H1 (cell line): ENCODE measurements at regions of chr2 and their contacts with region 1.

Region 1: GRCh38 chr2:78992451-78992806 is 33.1 kb upstream of the REG3G start:
- DNase-seq: peak; percentile 21 to 66
- H3K4me3 ChIP-seq: peak overlapping the region; percentile 33 to 65 (median 58); a peak in 7 of 8 replicates
- H3K27ac ChIP-seq: no peak overlapping the region
- H3K4me1 ChIP-seq: no peaks in the 10 kb centered on the region
- H3K27me3 ChIP-seq: peaks cover 10 to 29% (median 26%) of the 10 kb centered on the region in 4 experiments
- CTCF ChIP-seq: peak; percentile 51 to 65 (median 57)
- EP300 ChIP-seq: no peak
- POLR2A ChIP-seq: no peak
- RAD21 ChIP-seq: peak; percentile 39 to 42

Region 2: DNA sequence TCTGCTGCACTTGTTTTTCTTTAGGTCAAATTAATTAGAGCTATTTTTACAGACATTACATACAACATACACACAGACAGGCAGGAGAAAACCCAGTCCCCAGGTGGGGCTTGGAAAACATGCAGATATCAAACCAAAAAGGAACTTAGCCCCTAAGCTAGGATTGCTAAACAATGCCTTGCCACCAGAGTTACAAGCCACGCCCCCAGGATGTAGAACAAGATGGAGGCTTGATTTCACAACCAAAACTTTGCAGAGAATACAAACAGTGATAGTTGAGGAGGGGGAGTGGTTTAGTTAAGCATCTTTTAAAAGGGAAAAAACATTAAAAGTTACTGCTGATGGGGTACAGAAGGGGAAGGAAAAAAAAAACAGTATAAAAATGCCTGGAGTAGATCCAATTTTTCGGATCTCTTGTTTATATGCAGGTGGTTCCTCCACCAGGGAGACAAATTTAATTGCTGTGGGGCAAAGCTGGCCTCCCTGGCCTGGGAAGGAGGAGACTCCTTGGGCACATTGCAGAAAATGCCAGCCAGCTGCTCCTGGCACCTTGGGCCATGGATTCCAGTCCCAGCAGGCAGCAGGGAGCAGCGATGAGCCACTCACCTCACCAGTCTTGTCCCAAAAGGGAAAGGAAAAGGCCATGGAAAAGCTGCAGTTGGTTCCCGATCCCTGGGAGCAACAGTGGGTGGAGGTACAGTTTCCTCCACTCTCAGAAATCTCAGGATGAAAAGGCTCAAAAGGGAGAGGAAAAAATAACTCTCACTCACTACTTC is 315.3 kb before region 1 on chr2:
- CTCF ChIA-PET with region 1: interaction called, 11 read pairs
- POLR2A ChIA-PET with region 1: no interaction called
- DNase-seq: no peak
- H3K4me3 ChIP-seq: no peak overlapping the region
- H3K27ac ChIP-seq: no peak overlapping the region
- H3K4me1 ChIP-seq: no peaks in the 10 kb centered on the region; a peak in 1 of 7 replicates
- H3K27me3 ChIP-seq: no peaks in the 10 kb centered on the region
- CTCF ChIP-seq: peak; percentile 33 to 36 (median 36); a peak in 3 of 4 replicates
- EP300 ChIP-seq: no peak
- POLR2A ChIP-seq: no peak
- RAD21 ChIP-seq: peak; percentile 51 to 60